ENCODE measurements at regions of chr4 and their contacts with region 1.

Region 1: GRCh38 chr4:186587416-186588018 is 32.1 kb upstream of the MTNR1A start:
- DNase-seq: peak; percentile 68
- ATAC-seq: peak; percentile 65 to 78
- H3K4me3 ChIP-seq: no peak overlapping the region
- H3K27ac ChIP-seq: no peak overlapping the region
- H3K4me1 ChIP-seq: no peaks in the 10 kb centered on the region
- H3K27me3 ChIP-seq: no peaks in the 10 kb centered on the region
- CTCF ChIP-seq: peak; percentile 92

Region 2: GRCh38 chr4:186304866-186305511 is 282.5 kb before region 1 on chr4:
- intact Hi-C with region 1: loop called (anchors 10 kb)
- DNase-seq: no peak
- ATAC-seq: no peak
- H3K4me3 ChIP-seq: no peak overlapping the region
- H3K27ac ChIP-seq: no peak overlapping the region
- H3K4me1 ChIP-seq: no peaks in the 10 kb centered on the region
- H3K27me3 ChIP-seq: peaks cover 5% of the 10 kb centered on the region
- CTCF ChIP-seq: no peak

Region 3: GRCh38 chr4:186472948-186473347 is 114.6 kb before region 1 on chr4:
- intact Hi-C with region 1: no loop called
- DNase-seq: no peak
- ATAC-seq: no peak
- H3K4me3 ChIP-seq: no peak overlapping the region
- H3K27ac ChIP-seq: no peak overlapping the region
- H3K4me1 ChIP-seq: no peaks in the 10 kb centered on the region
- H3K27me3 ChIP-seq: no peaks in the 10 kb centered on the region
- CTCF ChIP-seq: no peak

Region 4: DNA sequence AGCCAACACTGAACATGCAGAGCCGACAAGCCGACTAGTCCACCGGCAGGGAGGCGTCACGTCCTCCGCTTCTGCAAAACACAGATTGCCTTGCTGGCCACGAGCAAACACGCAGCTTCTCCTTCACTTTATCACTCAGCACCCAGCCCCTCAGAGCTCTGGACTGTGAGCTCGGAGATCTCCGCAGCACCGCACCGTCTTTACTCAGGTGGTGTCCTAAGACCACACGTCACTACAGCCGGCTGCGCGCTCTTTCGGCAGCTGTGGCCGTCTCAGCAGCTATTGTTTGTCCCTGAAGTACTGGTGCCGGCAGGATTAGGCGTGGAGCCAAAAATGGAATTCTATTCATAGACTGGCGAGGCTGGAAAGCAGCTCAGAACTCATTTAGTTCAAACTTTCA is 64.1 kb after region 1 on chr4:
- intact Hi-C with region 1: no loop called
- DNase-seq: no peak
- ATAC-seq: peak; percentile 43 to 51
- H3K4me3 ChIP-seq: peak overlapping the region; percentile 25
- H3K27ac ChIP-seq: no peak overlapping the region
- H3K4me1 ChIP-seq: no peaks in the 10 kb centered on the region
- H3K27me3 ChIP-seq: no peaks in the 10 kb centered on the region
- CTCF ChIP-seq: no peak

Measured in lower lobe of right lung (tissue), 2 donors.